ENCODE measurements at regions of chr5 and their contacts with region 1.

Region 1: GRCh38 chr5:149667084-149667828 is 62.9 kb upstream of the PPARGC1B start:
- DNase-seq: no peak
- ATAC-seq: peak; percentile 81
- H3K4me3 ChIP-seq: no peak overlapping the region
- H3K27ac ChIP-seq: no peak overlapping the region
- H3K4me1 ChIP-seq: no peaks in the 10 kb centered on the region
- H3K27me3 ChIP-seq: no peaks in the 10 kb centered on the region
- CTCF ChIP-seq: peak; percentile 85

Region 2: DNA sequence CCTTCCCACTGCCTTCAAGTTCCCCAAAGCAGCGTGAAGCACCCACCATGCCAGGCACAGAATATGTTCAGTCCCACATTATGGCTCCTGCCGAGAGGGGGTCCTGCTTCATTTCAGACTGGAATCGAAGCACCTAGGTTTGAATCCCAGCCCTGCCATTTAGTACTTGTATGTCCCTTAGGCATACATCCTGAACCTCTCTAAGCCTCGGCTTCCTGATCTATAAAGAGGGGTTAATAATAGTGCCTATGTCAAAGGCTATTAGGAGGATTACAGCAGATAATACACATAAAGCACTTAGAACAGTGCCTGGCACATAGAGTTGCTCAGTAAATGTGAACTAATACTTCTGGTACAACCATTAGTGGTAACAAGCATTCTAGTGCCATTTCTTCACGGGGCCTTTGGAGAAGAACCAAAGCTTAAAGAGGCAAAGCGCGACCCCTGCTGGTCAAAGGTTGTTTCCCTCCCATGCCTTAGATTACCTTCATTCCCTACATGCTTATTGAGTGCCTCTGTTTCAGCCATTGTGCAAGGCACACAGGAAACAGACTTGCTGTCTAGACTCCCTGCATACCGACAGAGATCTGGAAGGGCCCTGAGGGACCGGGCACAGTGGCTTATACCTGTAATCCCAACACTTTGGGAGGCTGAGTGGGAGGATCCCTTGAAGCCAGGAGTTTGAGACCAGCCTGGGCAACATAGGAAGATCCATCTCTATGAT is 161.1 kb after region 1 on chr5:
- intact Hi-C with region 1: loop called (anchors 10 kb)
- DNase-seq: peak; percentile 89
- ATAC-seq: peak; percentile 92
- H3K4me3 ChIP-seq: no peak overlapping the region
- H3K27ac ChIP-seq: no peak overlapping the region
- H3K4me1 ChIP-seq: peaks cover 6% of the 10 kb centered on the region
- H3K27me3 ChIP-seq: no peaks in the 10 kb centered on the region
- CTCF ChIP-seq: peak; percentile 92